Naive thymus-derived CD4-positive, alpha-beta T cell (primary cell): ENCODE measurements at regions of chr1 and their contacts with region 1.

Region 1: DNA sequence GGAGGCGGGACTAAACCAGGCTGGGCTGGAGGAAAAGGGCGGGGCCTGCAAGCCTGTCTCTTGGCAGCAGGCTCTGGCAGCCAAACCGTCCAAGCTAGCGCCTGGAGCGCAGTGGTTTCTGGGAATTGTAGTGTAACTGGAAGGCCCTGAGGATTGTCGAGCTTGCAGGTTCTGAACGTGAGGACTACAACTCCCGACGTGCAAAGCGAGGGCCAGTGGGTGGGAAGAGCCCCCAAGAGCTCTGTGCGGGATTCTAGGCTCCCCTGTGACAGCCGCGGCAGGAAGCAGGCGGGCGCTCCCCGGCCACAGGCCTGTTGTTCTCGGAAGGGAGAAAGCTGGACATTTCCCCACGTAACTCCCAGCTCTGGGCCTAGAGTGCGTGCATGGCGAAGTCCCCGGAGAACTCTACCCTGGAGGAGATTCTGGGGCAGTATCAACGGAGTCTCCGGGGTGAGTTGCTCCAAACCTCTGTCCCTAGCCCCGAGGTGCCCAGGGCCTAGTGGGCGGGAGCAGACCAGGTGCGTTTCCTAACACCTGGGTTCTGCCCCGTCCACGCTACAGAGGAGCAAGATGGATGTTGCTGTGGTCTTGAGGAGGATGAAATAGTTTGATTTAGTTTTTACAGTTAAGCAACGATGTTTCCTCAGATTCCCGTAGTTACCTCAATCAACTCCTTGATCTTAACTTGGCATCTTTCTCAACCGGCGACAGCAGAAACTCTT is at the start of gene SDCCAG8:
- DNase-seq: peak; percentile 75 to 97 (median 94)
- ATAC-seq: peak; percentile 85
- H3K4me3 ChIP-seq: peak within 1 kb of the TSS; percentile 94
- H3K4me3 Mint-ChIP-seq: peak within 1 kb of the TSS; percentile 97 to 100 (median 100)
- H3K27ac ChIP-seq: peak within 1 kb of the TSS; percentile 96
- H3K27ac Mint-ChIP-seq: peak within 1 kb of the TSS; percentile 99 to 100 (median 100)
- H3K4me1 ChIP-seq: peaks cover 13 to 22% of the 10 kb centered on the region in 2 donors
- H3K4me1 Mint-ChIP-seq: peaks cover 19 to 66% (median 51%) of the 10 kb centered on the region in 7 donors
- H3K27me3 ChIP-seq: no peaks in the 10 kb centered on the region
- H3K27me3 Mint-ChIP-seq: peaks cover 0 to 3% (median 0%) of the 10 kb centered on the region in 5 donors
- total RNA-seq, gene SDCCAG8: 26.0 to 45.2 (median 41.4) TPM

Region 2: DNA sequence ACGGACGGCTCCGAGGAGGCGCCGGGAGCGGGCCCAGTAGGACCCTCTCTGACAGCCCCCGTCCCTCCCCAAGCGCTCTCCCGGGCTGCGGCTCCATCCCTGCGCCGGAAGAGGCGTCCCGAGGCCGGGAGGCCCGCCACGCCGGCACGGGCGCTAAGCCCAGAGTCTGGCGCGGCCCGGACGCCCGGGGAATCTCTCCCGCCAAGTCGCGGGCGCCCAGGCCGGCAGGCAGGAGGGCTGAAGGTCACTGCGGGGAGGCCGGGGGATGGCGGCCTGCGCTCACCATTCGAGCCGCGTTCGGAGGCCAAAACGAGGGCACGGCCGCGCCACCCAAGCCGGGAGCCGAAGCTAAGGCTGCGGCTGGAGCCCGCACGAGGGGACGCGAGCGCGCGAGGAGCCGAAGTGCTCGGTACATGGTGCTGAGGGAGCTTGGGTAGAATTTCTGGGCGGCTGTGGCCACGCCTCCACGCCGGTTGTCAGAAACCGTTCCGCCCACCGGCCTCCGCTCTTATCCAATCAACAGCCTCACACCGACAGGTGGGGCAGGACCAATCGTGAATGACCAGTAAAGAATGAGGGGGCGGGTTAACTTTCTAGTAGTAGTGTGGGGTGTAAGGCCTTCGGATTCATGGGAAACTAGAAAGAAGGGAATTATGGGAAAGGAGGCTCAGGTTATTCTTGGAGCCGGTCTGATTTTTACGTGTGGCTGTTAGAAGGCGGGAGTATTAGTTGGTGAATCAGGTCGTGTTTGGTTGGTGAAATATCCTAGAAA is 1736.5 kb before region 1 on chr1 and contains the start of gene FH:
- CTCF ChIA-PET with region 1: no interaction called
- POLR2A ChIA-PET with region 1: interaction called, 3 read pairs
- intact Hi-C with region 1: loop called (anchors 1 to 2 kb)
- DNase-seq: peak; percentile 83 to 96 (median 94)
- ATAC-seq: peak; percentile 99
- H3K4me3 ChIP-seq: peak within 1 kb of the TSS; percentile 66
- H3K4me3 Mint-ChIP-seq: peak within 1 kb of the TSS in 8 of 10 donors; percentile 85 to 96 (median 92)
- H3K27ac ChIP-seq: peak within 1 kb of the TSS; percentile 82
- H3K27ac Mint-ChIP-seq: peak within 1 kb of the TSS; percentile 56 to 92 (median 82)
- H3K4me1 ChIP-seq: peaks cover 5 to 6% of the 10 kb centered on the region in 2 donors
- H3K4me1 Mint-ChIP-seq: peaks cover 2 to 46% (median 38%) of the 10 kb centered on the region in 7 donors
- H3K27me3 ChIP-seq: no peaks in the 10 kb centered on the region
- H3K27me3 Mint-ChIP-seq: peaks cover 15 to 28% (median 26%) of the 10 kb centered on the region in 5 donors
- total RNA-seq, gene FH: 17.3 to 57.9 (median 21.8) TPM

Region 3: GRCh38 chr1:241847796-241848685 is 1407.9 kb before region 1 on chr1 and contains the start of gene EXO1:
- CTCF ChIA-PET with region 1: no interaction called
- POLR2A ChIA-PET with region 1: no interaction called
- intact Hi-C with region 1: loop called (anchors 1 to 2 kb)
- DNase-seq: peak; percentile 84 to 92 (median 89)
- ATAC-seq: peak; percentile 99
- H3K4me3 ChIP-seq: peak within 1 kb of the TSS; percentile 96
- H3K4me3 Mint-ChIP-seq: peak within 1 kb of the TSS; percentile 87 to 99 (median 96)
- H3K27ac ChIP-seq: peak within 1 kb of the TSS; percentile 96
- H3K27ac Mint-ChIP-seq: peak within 1 kb of the TSS; percentile 95 to 99 (median 99)
- H3K4me1 ChIP-seq: peaks cover 6 to 12% of the 10 kb centered on the region in 2 donors
- H3K4me1 Mint-ChIP-seq: peaks cover 7 to 42% (median 17%) of the 10 kb centered on the region in 7 donors
- H3K27me3 ChIP-seq: no peaks in the 10 kb centered on the region
- H3K27me3 Mint-ChIP-seq: peaks cover 0 to 8% (median 0%) of the 10 kb centered on the region in 5 donors
- total RNA-seq, gene EXO1: 0.11 to 29.8 (median 1.0) TPM

Region 4: DNA sequence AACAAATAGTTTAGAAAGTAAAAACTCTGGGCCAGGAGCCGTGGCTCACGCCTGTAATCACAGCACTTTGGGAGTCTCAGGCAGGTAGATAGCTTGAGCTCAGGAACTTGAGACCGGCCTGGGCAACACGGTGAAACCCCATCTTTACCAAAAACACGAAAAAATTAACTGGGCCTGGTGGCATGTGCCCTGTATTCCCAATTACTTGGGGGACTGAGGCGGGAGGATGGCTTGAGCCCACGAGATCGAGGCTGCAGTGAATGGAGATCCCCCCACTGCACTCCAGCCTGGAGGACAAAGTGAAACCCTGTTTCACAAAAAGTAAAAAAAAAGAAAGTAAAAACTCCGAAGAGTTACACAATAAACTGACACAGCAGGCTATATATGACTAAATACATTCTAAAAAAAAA is 11.5 kb before region 1 on chr1:
- CTCF ChIA-PET with region 1: interaction called, 3 read pairs
- POLR2A ChIA-PET with region 1: interaction called, 14 read pairs
- intact Hi-C with region 1: no loop called
- DNase-seq: no peak
- ATAC-seq: no peak
- H3K4me3 ChIP-seq: no peak overlapping the region
- H3K4me3 Mint-ChIP-seq: peak overlapping the region in 3 of 10 donors; percentile 4 to 18 (median 9)
- H3K27ac ChIP-seq: no peak overlapping the region
- H3K27ac Mint-ChIP-seq: peak overlapping the region in 1 of 9 donors; percentile 12
- H3K4me1 ChIP-seq: no peaks in the 10 kb centered on the region
- H3K4me1 Mint-ChIP-seq: peaks cover 6 to 47% (median 21%) of the 10 kb centered on the region in 7 donors
- H3K27me3 ChIP-seq: no peaks in the 10 kb centered on the region
- H3K27me3 Mint-ChIP-seq: no peaks in the 10 kb centered on the region

Region 5: DNA sequence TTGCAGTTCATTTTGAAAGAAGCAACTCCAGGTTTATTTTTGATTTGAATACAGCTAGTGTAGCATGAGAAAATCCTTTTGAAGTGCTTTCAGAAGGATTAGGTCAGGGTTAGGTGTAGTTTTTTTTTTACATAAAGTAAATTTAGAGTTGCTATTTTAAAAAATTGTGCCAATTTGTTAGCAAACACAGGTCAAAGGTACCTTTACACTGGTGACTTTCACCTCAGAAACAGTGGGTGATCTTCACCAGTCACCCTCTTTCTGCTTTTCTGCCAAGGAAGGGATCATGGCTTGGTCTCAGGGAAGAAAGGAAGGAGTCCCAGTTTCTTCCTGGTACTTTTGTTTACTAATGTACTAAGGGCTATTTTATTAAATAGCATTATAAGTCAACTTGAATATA is 111.4 kb after region 1 on chr1:
- CTCF ChIA-PET with region 1: no interaction called
- POLR2A ChIA-PET with region 1: no interaction called
- intact Hi-C with region 1: no loop called
- DNase-seq: no peak
- ATAC-seq: no peak
- H3K4me3 ChIP-seq: no peak overlapping the region
- H3K4me3 Mint-ChIP-seq: no peak overlapping the region
- H3K27ac ChIP-seq: no peak overlapping the region
- H3K27ac Mint-ChIP-seq: no peak overlapping the region
- H3K4me1 ChIP-seq: no peaks in the 10 kb centered on the region
- H3K4me1 Mint-ChIP-seq: peaks cover 0 to 2% (median 0%) of the 10 kb centered on the region in 7 donors
- H3K27me3 ChIP-seq: no peaks in the 10 kb centered on the region
- H3K27me3 Mint-ChIP-seq: no peaks in the 10 kb centered on the region

Region 6: GRCh38 chr1:243596431-243597062 is 340.6 kb after region 1 on chr1:
- CTCF ChIA-PET with region 1: no interaction called
- POLR2A ChIA-PET with region 1: no interaction called
- intact Hi-C with region 1: loop called in 1 of 2 experiments (anchors 10 kb)
- DNase-seq: peak in 1 of 9 donors; percentile 36
- ATAC-seq: peak; percentile 81
- H3K4me3 ChIP-seq: no peak overlapping the region
- H3K4me3 Mint-ChIP-seq: peak overlapping the region in 4 of 10 donors; percentile 6 to 73 (median 44)
- H3K27ac ChIP-seq: no peak overlapping the region
- H3K27ac Mint-ChIP-seq: peak overlapping the region in 5 of 9 donors; percentile 28 to 89 (median 40)
- H3K4me1 ChIP-seq: peaks cover 4 to 19% of the 10 kb centered on the region in 2 donors
- H3K4me1 Mint-ChIP-seq: peaks cover 23 to 48% (median 32%) of the 10 kb centered on the region in 7 donors
- H3K27me3 ChIP-seq: no peaks in the 10 kb centered on the region
- H3K27me3 Mint-ChIP-seq: no peaks in the 10 kb centered on the region

Region 7: DNA sequence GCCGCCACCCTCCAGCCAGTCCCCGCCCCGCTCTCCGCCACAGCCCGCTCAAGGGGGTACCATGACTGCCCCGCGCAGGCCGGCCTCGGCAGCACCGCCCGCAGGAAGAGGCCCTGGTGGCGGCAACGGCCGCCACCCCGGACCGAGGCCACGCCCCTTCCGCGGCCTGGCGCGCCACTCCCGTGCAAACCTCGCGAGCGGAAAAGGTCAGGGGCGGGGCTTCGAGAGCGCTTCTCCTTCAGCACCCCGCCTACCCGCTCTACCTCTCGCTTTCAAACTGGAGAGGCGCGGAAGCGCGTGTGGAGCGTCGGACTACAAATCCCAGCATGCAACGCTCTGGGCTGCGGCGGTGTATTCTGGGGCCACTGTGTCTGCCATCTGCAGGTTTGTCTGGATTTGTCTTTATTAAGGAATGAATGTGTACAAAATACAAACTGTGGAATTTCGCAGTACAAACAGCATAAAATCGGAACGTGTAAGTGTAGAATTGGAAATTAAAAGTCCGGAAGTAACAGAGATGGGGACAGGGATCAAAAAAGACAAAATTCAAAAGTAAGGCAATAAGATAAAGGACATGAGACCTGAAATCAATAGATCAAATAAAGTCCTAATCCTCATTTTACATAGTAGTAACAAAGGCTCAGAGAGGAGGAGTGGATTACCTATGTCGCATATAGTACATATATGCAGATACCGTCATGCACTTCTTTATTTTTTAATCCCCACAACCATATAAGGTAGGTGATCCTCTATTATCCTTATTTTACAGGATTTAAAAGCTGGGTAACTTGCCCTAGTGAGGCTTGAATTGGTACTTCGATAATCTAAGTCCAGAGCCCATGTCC is 1196.2 kb after region 1 on chr1:
- CTCF ChIA-PET with region 1: no interaction called
- POLR2A ChIA-PET with region 1: interaction called, 6 read pairs
- intact Hi-C with region 1: loop called (anchors 1 kb)
- DNase-seq: peak; percentile 93 to 99 (median 99)
- ATAC-seq: peak; percentile 94
- H3K4me3 ChIP-seq: peak overlapping the region; percentile 64
- H3K4me3 Mint-ChIP-seq: peak overlapping the region; percentile 76 to 99 (median 93)
- H3K27ac ChIP-seq: peak overlapping the region; percentile 96
- H3K27ac Mint-ChIP-seq: peak overlapping the region; percentile 85 to 99 (median 97)
- H3K4me1 ChIP-seq: peaks cover 27 to 36% of the 10 kb centered on the region in 2 donors
- H3K4me1 Mint-ChIP-seq: peaks cover 29 to 56% (median 41%) of the 10 kb centered on the region in 7 donors
- H3K27me3 ChIP-seq: no peaks in the 10 kb centered on the region
- H3K27me3 Mint-ChIP-seq: no peaks in the 10 kb centered on the region

Region 8: DNA sequence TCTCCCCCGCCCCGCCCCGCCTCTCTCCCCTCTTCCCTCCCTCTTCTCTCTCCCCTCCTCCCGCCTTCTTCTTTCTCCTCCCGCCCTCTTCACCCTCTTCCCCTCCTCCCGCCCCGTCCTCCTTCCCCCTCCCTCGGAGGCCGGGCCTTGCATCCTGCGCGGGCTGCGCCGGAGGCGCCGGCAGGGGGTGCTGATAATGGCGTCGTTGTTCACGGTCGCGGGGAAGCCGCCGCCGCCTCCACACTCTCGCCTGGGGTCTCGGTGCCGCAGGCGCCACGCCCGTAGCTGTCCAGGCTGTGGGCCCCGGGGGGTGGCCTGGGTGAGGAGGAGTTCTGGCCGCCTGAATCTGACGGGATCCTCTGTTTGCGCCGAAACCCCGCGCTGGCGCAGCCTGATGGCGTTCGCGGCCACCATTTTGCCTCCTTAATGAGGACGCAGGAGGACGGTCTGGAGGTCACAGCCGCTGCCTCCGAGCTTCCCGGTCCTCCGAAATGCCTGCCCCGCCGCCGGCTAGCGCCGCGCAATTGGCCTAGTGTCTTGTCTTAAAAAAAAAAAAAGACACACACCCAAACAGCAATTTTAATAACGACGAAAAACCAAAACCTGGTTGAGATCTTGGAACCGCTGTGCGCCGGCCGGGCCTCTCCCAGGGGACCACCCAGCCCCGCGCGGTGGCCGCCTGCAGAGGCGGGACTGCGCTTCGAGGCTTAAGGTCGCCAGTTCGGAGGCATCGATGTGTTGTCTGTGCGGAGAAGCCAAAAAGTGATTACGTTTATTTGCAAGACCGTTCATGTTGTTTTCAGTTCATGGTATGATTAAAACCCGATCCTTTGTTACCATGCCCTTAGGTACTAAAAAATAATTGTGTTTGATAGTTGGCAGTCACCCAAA is 1715.0 kb after region 1 on chr1:
- CTCF ChIA-PET with region 1: no interaction called
- POLR2A ChIA-PET with region 1: interaction called, 3 read pairs
- intact Hi-C with region 1: loop called in 1 of 2 experiments (anchors 10 kb)
- DNase-seq: peak; percentile 91 to 97 (median 95)
- ATAC-seq: peak; percentile 88
- H3K4me3 ChIP-seq: peak overlapping the region; percentile 81
- H3K4me3 Mint-ChIP-seq: peak overlapping the region; percentile 91 to 95 (median 93)
- H3K27ac ChIP-seq: peak overlapping the region; percentile 99
- H3K27ac Mint-ChIP-seq: peak overlapping the region; percentile 97 to 100 (median 99)
- H3K4me1 ChIP-seq: peaks cover 5 to 12% of the 10 kb centered on the region in 2 donors
- H3K4me1 Mint-ChIP-seq: peaks cover 7 to 31% (median 25%) of the 10 kb centered on the region in 7 donors
- H3K27me3 ChIP-seq: no peaks in the 10 kb centered on the region
- H3K27me3 Mint-ChIP-seq: peaks cover 0 to 14% (median 0%) of the 10 kb centered on the region in 5 donors